ENCODE measurements at regions of chr17 and their contacts with region 1.

Region 1: DNA sequence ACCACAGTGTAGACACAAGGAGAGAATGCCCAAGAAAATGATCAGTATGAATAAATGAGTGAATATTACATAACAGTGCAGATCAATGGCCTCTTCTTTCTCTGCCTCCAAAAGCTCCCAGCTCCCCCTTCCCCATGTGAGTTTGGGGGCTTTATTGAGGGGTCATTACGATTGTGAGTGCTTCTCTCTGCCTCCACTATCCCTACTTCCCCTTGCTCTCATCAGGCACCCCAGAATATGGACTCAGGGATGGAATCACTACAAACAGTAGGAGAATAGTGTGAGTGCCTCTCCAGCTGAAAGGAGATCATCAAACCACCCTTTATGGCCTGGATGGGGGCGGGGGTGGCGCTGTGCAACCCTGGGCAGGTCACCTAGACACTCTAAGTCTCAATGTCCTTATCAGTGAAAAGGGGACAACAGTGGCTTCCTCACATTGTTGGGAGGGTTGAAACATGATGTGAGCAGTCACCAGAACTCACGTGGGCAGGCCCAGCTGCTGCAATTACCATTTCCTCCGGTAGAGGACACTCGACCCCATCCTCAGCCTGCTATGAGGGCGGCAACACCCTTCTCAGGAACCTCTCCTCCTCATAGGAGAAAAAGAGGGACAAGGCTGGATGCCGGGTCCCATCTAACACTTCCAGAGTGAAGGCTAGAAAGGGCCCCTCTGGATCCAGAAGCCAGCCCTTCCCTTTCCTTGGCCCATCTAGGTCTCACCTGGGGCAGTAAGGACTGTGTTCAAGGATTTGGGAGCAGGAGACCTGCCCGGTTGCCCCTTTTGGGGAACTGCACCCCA is 2.1 kb upstream of the EPOP start:
- DNase-seq: peak; percentile 89
- H3K4me3 ChIP-seq: no peak overlapping the region
- H3K27ac ChIP-seq: no peak overlapping the region
- H3K4me1 ChIP-seq: no peaks in the 10 kb centered on the region
- H3K27me3 ChIP-seq: peaks cover 27% of the 10 kb centered on the region
- CTCF ChIP-seq: peak; percentile 98

Region 2: GRCh38 chr17:38724337-38724988 is 47.6 kb after region 1 on chr17:
- intact Hi-C with region 1: no loop called
- DNase-seq: peak; percentile 72
- H3K4me3 ChIP-seq: no peak overlapping the region
- H3K27ac ChIP-seq: peak overlapping the region; percentile 22
- H3K4me1 ChIP-seq: peaks cover 14% of the 10 kb centered on the region
- H3K27me3 ChIP-seq: no peaks in the 10 kb centered on the region
- CTCF ChIP-seq: no peak

Region 3: GRCh38 chr17:38735161-38735997 is 58.5 kb after region 1 on chr17:
- intact Hi-C with region 1: loop called (anchors 2 kb)
- DNase-seq: peak; percentile 69
- H3K4me3 ChIP-seq: no peak overlapping the region
- H3K27ac ChIP-seq: no peak overlapping the region
- H3K4me1 ChIP-seq: peaks cover 18% of the 10 kb centered on the region
- H3K27me3 ChIP-seq: no peaks in the 10 kb centered on the region
- CTCF ChIP-seq: peak; percentile 78

Measured in colonic mucosa (tissue), 4 donors.